Activated CD4-positive, alpha-beta T cell treated with anti-CD3 and anti-CD28 coated beads, Interleukin-2, amount 10 ng/mL, durations not matched to agents 24 days and 14 days (primary cell): ENCODE measurements at regions of chr6 and their contacts with region 1.

Region 1: GRCh38 chr6:150491131-150491810 is 108.4 kb upstream of the PLEKHG1 start:
- DNase-seq: peak; percentile 61
- H3K4me3 Mint-ChIP-seq: peak overlapping the region; percentile 15
- H3K27ac Mint-ChIP-seq: peak overlapping the region; percentile 13
- H3K4me1 Mint-ChIP-seq: peaks cover 8% of the 10 kb centered on the region
- H3K27me3 Mint-ChIP-seq: peaks cover 5% of the 10 kb centered on the region

Region 2: DNA sequence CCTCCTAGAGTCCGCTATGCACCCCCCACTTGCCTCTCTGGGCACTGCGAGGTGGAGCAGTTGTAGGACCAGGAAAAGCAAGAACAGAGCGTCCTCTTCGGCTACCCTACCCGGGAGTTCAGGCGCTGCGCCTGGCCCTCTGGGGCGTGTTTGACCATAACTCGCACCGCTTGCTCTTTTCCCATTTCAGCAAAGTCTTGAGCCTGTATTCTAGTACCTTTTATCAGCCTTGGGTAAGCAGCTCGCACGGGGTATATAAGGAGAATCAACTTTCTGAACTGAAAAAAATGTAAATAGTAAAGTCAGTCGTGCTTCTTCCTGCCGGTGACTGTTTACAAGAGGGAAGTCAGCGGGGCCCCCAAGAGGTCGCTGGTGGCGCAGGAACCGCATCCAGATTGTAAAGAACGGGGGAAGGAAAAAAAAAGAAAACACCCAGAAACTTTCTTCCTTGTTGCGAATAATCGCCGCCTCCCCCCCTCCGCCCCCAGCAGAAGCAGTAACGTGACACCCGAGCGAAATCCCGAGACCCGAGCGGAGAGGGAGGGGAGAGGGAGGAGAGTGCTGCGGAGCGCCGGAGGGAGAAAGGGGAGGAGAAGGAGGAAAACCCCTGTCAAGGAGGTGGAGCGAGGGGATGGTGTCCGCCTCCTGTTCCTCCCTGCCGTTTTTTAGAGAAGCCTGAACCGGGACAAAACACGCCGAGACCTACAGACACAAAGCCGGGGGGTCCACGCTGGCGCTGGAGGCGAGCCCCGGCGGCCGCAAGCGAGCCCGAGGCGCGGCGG is 1744.7 kb before region 1 on chr6 and contains the start of gene UST:
- intact Hi-C with region 1: loop called (anchors 10 kb)
- DNase-seq: peak; percentile 83
- H3K4me3 Mint-ChIP-seq: peak within 1 kb of the TSS; percentile 94
- H3K27ac Mint-ChIP-seq: peak within 1 kb of the TSS; percentile 42
- H3K4me1 Mint-ChIP-seq: peaks cover 11% of the 10 kb centered on the region
- H3K27me3 Mint-ChIP-seq: peaks cover 76% of the 10 kb centered on the region
- total RNA-seq, gene UST: 0.70 and 0.90 TPM in 2 replicates

Region 3: GRCh38 chr6:150567823-150568383 is 76.6 kb after region 1 on chr6:
- intact Hi-C with region 1: no loop called
- DNase-seq: no peak
- H3K4me3 Mint-ChIP-seq: no peak overlapping the region
- H3K27ac Mint-ChIP-seq: no peak overlapping the region
- H3K4me1 Mint-ChIP-seq: no peaks in the 10 kb centered on the region
- H3K27me3 Mint-ChIP-seq: peaks cover 17% of the 10 kb centered on the region